GM10248 (cell line): ENCODE measurements at regions of chr12 and their contacts with region 1.

Region 1: GRCh38 chr12:23303821-23304220 is 645.6 kb downstream of the SOX5 start:
- DNase-seq: no peak
- CTCF ChIP-seq: no peak

Region 2: GRCh38 chr12:23221066-23221465 is 82.8 kb before region 1 on chr12:
- CTCF ChIA-PET with region 1: no interaction called
- POLR2A ChIA-PET with region 1: no interaction called
- DNase-seq: no peak
- CTCF ChIP-seq: no peak

Region 3: GRCh38 chr12:23277831-23278230 is 26.0 kb before region 1 on chr12:
- CTCF ChIA-PET with region 1: interaction called, 10 read pairs
- POLR2A ChIA-PET with region 1: no interaction called
- DNase-seq: no peak
- CTCF ChIP-seq: no peak